Panc1 (cell line): ENCODE measurements at regions of chr1 and their contacts with region 1.

Region 1: GRCh38 chr1:151680812-151681211 is 35.8 kb downstream of the CELF3 start:
- DNase-seq: peak; percentile 74
- ATAC-seq: peak; percentile 87
- H3K4me3 ChIP-seq: no peak overlapping the region
- H3K27ac ChIP-seq: no peak overlapping the region
- H3K4me1 ChIP-seq: peaks cover 3% of the 10 kb centered on the region; the same call in 1 of the 2 replicates
- H3K27me3 ChIP-seq: no peaks in the 10 kb centered on the region
- CTCF ChIP-seq: no peak

Region 2: GRCh38 chr1:151529781-151530180 is 151.0 kb before region 1 on chr1:
- CTCF ChIA-PET with region 1: no interaction called
- POLR2A ChIA-PET with region 1: interaction called, 10 read pairs
- in situ Hi-C with region 1: no loop called
- intact Hi-C with region 1: no loop called
- DNase-seq: no peak
- ATAC-seq: no peak
- H3K4me3 ChIP-seq: no peak overlapping the region
- H3K27ac ChIP-seq: no peak overlapping the region
- H3K4me1 ChIP-seq: no peaks in the 10 kb centered on the region
- H3K27me3 ChIP-seq: no peaks in the 10 kb centered on the region
- CTCF ChIP-seq: no peak